ENCODE measurements at regions of chr19 and their contacts with region 1.

Region 1: GRCh38 chr19:36114763-36115452 is at the start of gene POLR2I:
- DNase-seq: peak; percentile 99 to 100 (median 99)
- H3K4me3 ChIP-seq: peak within 1 kb of the TSS; percentile 53 to 90 (median 85)
- H3K4me3 Mint-ChIP-seq: peak within 1 kb of the TSS; percentile 89 to 94
- H3K27ac ChIP-seq: peak within 1 kb of the TSS; percentile 68 to 80
- H3K27ac Mint-ChIP-seq: peak within 1 kb of the TSS; percentile 88 to 97 (median 96)
- H3K4me1 ChIP-seq: peaks cover 25 to 34% of the 10 kb centered on the region in 2 donors
- H3K4me1 Mint-ChIP-seq: peaks cover 26% of the 10 kb centered on the region
- H3K27me3 ChIP-seq: no peaks in the 10 kb centered on the region
- H3K27me3 Mint-ChIP-seq: peaks cover 0 to 7% (median 0%) of the 10 kb centered on the region in 3 donors
- CTCF ChIP-seq: no peak
- polyA plus RNA-seq, gene POLR2I: 21.2 to 73.9 (median 57.9) TPM

Region 2: DNA sequence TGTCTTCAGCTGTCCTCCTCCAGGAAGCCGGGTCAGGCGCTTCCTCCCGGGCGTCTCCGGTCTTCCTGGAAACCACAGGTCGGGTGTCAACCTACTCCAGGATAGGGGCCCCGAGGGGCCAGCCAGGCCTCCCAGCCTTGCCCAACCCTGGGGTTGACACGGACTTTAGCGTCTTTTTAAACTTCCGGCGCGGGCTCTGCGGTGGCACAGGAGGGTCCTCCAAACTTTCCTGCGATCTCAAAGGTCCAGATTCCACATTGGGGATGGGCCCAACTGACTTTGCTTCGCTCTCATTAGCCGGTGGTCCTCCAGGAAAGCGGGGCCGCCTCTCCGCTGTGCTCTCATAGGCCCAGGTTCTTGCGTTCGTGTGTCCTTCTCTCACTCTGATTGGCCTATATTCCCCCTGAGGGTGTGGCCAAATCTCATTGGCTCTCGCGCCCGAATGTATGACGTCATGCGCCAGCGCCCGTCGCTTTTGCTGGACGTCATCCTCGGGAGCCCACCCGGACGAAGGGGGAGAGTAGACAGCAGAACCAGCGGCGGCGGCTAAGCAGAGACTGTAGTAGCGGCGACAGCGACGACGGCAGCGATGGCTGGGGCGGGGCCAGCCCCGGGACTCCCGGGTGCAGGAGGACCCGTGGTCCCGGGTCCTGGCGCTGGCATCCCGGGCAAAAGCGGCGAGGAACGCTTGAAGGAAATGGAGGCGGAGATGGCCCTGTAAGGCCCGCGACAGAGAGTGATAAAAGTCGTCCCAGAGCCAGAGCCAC is 486.2 kb before region 1 on chr19 and contains the start of gene RBM42:
- intact Hi-C with region 1: loop called in 1 of 2 experiments (anchors 5 kb)
- DNase-seq: peak; percentile 97 to 98 (median 97)
- H3K4me3 ChIP-seq: peak within 1 kb of the TSS; percentile 41 to 99 (median 98)
- H3K4me3 Mint-ChIP-seq: peak within 1 kb of the TSS; percentile 93 to 98
- H3K27ac ChIP-seq: peak within 1 kb of the TSS; percentile 85 to 99
- H3K27ac Mint-ChIP-seq: peak within 1 kb of the TSS; percentile 96 to 100 (median 96)
- H3K4me1 ChIP-seq: peaks cover 14 to 15% of the 10 kb centered on the region in 2 donors
- H3K4me1 Mint-ChIP-seq: peaks cover 13% of the 10 kb centered on the region
- H3K27me3 ChIP-seq: no peaks in the 10 kb centered on the region
- H3K27me3 Mint-ChIP-seq: peaks cover 0 to 3% (median 2%) of the 10 kb centered on the region in 3 donors
- CTCF ChIP-seq: no peak
- polyA plus RNA-seq, gene RBM42: 29.5 to 53.3 (median 50.3) TPM

Region 3: DNA sequence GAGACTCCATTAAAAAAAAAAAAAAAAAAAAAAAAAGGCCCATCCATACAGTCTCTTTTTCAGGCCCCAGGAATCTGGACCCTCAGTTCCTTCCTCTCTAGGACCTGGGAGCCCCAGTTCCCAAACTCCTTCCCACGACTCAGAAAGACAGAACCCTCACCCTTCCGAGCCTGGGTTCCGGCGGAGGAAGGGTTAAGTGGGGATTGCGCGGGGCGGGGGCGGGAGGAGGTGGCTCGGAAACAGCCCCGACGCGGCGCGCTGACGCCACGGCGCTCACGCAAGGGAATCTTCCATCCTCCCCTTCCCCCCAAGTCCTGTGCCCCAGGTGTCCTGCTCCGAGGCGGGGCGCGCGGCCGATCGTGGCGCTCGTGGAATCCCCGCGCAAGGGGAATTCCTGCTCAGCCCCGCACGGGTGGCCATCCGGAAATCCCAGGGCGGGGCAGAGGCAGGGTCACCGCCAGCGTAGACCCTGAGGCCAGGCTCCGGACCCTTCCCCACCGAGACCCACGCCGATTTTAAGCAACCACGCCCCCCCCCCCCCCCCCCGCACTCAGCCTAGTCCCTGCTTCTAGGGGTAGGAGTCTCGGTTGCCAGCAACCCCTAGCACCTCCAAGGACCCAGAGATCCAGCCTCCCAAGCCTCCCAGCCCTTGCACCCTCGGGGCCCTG is 215.2 kb before region 1 on chr19:
- intact Hi-C with region 1: loop called in 1 of 2 experiments (anchors 10 kb)
- DNase-seq: peak; percentile 77 to 96 (median 89)
- H3K4me3 ChIP-seq: peak overlapping the region; percentile 80 to 99 (median 97)
- H3K4me3 Mint-ChIP-seq: peak overlapping the region; percentile 97 to 98
- H3K27ac ChIP-seq: peak overlapping the region; percentile 95 to 98
- H3K27ac Mint-ChIP-seq: peak overlapping the region; percentile 96 to 100 (median 100)
- H3K4me1 ChIP-seq: peaks cover 54 to 65% of the 10 kb centered on the region in 2 donors
- H3K4me1 Mint-ChIP-seq: peaks cover 54% of the 10 kb centered on the region
- H3K27me3 ChIP-seq: no peaks in the 10 kb centered on the region
- H3K27me3 Mint-ChIP-seq: peaks cover 0 to 10% (median 0%) of the 10 kb centered on the region in 3 donors
- CTCF ChIP-seq: no peak

Region 4: GRCh38 chr19:35949131-35949530 is 165.8 kb before region 1 on chr19:
- intact Hi-C with region 1: no loop called
- DNase-seq: no peak
- H3K4me3 ChIP-seq: no peak overlapping the region
- H3K4me3 Mint-ChIP-seq: no peak overlapping the region
- H3K27ac ChIP-seq: no peak overlapping the region
- H3K27ac Mint-ChIP-seq: peak overlapping the region in 1 of 7 donors; percentile 79
- H3K4me1 ChIP-seq: peaks cover 16 to 20% of the 10 kb centered on the region in 2 donors
- H3K4me1 Mint-ChIP-seq: peaks cover 30% of the 10 kb centered on the region
- H3K27me3 ChIP-seq: no peaks in the 10 kb centered on the region
- H3K27me3 Mint-ChIP-seq: peaks cover 4 to 17% (median 8%) of the 10 kb centered on the region in 3 donors
- CTCF ChIP-seq: no peak

Region 5: GRCh38 chr19:36054119-36054732 is 60.7 kb before region 1 on chr19 and contains the start of gene THAP8:
- intact Hi-C with region 1: loop called (anchors 1 to 5 kb)
- DNase-seq: peak; percentile 100
- H3K4me3 ChIP-seq: peak within 1 kb of the TSS; percentile 70 to 94 (median 90)
- H3K4me3 Mint-ChIP-seq: peak within 1 kb of the TSS; percentile 99 to 100
- H3K27ac ChIP-seq: peak within 1 kb of the TSS; percentile 93 to 95
- H3K27ac Mint-ChIP-seq: peak within 1 kb of the TSS; percentile 97 to 99 (median 98)
- H3K4me1 ChIP-seq: peaks cover 12 to 18% of the 10 kb centered on the region in 2 donors
- H3K4me1 Mint-ChIP-seq: peaks cover 17% of the 10 kb centered on the region
- H3K27me3 ChIP-seq: no peaks in the 10 kb centered on the region
- H3K27me3 Mint-ChIP-seq: peaks cover 0 to 1% (median 0%) of the 10 kb centered on the region in 3 donors
- CTCF ChIP-seq: peak; percentile 53
- polyA plus RNA-seq, gene THAP8: 2.4 to 6.0 (median 3.1) TPM

Region 6: GRCh38 chr19:36214386-36215275 is 99.7 kb after region 1 on chr19 and contains the starts of genes ZNF146 and ZNF565:
- intact Hi-C with region 1: loop called (anchors 5 to 10 kb)
- DNase-seq: peak; percentile 96 to 99 (median 96)
- H3K4me3 ChIP-seq: peak within 1 kb of the TSS; percentile 61 to 92 (median 69)
- H3K4me3 Mint-ChIP-seq: no peak within 1 kb of the TSS
- H3K27ac ChIP-seq: peak within 1 kb of the TSS; percentile 72 to 95
- H3K27ac Mint-ChIP-seq: no peak within 1 kb of the TSS
- H3K4me1 ChIP-seq: peaks cover 11 to 18% of the 10 kb centered on the region in 2 donors
- H3K4me1 Mint-ChIP-seq: peaks cover 5% of the 10 kb centered on the region
- H3K27me3 ChIP-seq: no peaks in the 10 kb centered on the region
- H3K27me3 Mint-ChIP-seq: no peaks in the 10 kb centered on the region
- CTCF ChIP-seq: no peak
- polyA plus RNA-seq, gene ZNF146: 12.2 to 26.5 (median 15.8) TPM
- polyA plus RNA-seq, gene ZNF565: 1.5 to 3.5 (median 2.1) TPM

Measured in CD14-positive monocyte (primary cell).